ENCODE measurements at regions of chr3 and their contacts with region 1.

Region 1: DNA sequence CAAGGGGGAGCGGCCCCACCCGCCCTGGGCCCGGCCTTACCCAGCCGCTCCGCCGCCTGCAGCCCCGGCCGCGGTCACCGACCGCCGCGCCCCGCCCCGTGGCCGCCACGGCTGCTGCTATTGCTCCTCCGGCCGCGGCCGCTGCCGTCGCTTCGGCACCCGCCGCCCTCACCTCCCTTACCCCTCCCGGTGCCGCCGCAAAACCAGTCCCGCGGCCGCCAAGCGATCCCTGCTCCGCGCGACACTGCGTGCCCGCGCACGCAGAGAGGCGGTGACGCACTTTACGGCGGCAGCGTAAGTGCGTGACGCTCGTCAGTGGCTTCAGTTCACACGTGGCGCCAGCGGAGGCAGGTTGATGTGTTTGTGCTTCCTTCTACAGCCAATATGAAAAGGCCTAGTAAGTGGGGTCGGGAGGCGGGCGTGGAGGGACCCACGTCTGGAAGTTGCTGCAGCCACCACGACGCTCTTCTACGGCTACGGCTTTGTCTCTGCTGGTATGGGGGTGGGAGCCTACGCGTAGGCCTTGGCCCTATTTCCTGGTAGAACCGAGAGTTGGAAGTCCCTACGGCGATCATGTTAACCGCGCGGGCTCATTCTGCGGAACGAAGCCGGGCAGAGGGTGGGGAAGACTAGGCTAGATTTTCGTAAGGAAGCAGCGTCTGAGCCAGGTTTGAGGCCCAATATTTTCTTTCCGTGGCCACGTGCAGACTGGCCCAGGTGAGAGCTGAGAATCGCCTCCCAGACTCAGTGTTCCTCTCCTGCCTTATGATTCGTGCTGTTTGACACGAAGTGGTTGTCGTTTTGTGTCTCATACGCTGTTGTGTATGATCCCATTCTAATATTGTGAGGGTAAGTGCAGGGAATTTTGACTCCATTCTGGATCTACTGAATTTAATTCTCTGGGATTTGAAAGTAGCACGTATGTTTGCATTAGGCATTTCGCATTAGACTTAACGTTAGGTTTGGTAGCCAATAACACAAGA is at the starts of genes GNL3 and PBRM1:
- DNase-seq: peak; percentile 97
- ATAC-seq: peak; percentile 91
- total RNA-seq, gene GNL3: 28.8 TPM
- total RNA-seq, gene PBRM1: 45.3 TPM

Region 2: DNA sequence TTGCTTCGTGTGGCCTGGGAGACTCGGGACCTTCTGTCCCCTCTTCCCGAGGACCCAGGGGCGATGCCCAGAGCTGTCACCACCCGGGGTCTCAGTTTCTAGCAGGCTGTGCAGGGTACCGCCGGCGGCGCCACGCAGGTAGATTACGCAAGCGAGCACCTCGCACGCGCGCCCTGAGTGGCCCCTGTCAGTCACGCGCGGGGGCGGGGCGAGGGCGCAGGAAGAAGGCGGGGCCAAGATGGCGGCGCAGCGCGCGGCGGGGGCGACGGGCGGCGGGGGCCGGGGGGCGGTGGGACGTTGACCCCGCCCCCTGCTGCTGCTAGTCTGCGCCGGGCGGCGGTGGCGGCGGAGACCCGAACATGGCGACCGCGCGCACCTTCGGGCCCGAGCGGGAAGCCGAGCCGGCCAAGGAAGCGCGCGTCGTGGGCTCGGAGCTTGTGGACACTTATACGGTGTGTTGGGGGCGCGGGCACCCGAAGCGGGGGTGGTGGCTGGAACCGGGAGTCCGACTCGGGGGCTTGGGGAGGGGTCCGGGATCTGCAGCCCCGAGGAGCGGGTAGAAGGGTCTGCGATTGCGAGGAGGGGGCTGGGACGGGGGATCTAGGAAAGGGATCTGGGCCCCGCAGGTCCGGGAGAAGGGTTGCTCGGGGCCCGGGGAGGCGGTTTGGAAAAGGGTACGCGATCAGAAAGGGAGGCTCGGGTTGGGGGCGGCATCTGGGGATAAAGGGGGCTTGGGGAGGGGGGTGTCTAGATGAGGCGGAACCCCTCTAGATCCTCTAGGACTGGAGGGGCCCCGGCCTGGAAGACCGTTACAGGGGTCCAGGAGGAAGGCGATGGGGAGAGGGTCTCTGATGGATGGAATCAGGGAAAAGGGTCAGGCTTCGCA is 230.5 kb before region 1 on chr3 and contains the start of gene NISCH:
- intact Hi-C with region 1: loop called (anchors 5 kb)
- DNase-seq: peak; percentile 96
- ATAC-seq: peak; percentile 62
- total RNA-seq, gene NISCH: 45.6 TPM

Region 3: DNA sequence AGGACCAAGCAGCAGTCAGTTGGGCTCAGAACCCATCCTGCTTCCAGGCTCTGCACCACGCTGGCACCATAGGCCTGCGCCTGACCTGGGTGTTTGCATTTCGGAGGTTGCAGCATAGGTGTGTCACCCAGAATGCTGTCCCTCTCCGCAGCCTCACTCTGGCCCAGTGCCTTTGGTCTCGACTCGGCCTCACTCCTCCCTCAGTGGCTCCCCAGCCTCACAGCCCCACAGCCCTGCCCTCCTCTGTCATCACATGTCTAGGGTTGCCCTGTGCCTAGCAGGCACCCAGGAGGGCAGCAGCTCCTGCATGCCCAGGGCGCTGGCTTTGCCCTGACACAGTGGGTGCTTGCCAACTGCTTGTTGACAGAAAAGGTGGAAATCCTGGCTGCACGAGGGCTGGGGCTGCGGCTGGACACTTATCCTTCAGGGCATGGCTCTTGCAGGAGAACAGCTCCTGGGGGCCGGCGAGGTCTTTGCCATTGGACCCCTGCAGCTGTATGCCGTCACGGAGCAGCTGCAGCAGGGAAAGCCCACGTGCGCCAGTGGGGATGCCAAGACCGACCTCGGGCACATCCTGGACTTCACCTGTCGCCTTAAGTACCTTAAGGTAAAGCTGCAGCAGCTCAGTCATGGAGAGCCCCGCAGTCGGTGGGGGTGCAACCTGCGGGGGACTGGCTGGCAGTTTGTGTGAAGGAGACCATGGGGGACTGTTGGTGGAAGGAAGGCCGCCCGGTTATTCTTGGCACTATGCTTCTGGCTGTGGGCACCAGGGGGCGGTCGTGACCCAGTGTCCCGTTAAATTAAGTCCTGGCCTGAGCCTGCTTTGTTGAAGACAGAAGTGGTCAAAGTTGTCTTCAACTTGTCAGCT is 214.4 kb before region 1 on chr3:
- intact Hi-C with region 1: loop called (anchors 5 kb)
- DNase-seq: peak; percentile 89
- ATAC-seq: peak; percentile 83

Region 4: GRCh38 chr3:52561028-52561747 is 124.8 kb before region 1 on chr3:
- intact Hi-C with region 1: no loop called
- DNase-seq: no peak
- ATAC-seq: peak; percentile 23

Region 5: DNA sequence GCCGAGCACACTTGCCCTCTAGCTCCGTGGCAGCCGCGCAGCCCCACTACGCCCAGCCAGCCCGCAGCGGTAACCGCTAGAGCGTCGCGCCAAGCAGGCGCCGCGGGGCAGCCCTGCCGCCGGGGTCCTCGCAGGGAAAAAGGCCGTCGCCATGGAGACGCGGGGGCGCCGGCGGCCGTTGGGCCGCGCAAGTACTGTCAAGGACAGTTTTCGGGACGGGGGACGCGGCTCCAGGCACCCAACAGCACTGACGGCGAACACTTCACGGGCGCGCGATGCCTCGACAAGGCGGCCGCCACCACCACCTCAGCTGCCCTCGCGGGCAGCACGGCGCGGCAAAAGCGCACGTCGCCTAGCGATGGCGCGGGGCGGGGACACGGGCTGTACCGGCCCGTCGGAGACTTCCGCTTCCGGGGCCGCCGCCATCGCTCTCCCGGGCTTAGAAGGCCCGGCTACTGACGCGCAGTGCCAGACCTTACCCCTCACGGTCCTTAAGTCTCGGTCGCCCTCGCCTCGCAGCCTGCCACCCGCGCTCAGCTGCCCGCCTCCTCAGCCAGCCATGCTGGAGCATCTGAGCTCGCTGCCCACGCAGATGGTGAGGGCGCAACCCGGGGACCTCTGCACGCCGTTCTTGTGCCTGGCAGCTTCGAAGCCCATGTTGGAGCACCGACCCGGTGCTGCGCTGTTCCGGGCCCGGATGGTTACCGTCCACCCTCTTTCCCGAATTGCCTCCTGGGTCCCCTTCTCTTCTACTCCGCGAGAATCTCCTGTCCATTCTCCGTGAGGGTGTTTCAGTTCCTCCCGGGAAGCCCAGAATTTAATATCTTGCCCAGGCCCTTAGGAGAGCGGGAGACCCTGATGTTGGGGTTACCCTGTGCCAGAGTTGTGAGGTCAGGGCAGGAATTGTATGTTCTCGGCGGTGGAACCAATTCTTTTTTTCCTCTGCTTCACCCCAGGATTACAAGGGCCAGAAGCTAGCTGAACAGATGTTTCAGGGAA is 20.0 kb after region 1 on chr3 and contains the starts of genes GLT8D1 and SPCS1:
- intact Hi-C with region 1: loop called (anchors 2 kb)
- DNase-seq: peak; percentile 95
- ATAC-seq: peak; percentile 96
- total RNA-seq, gene GLT8D1: 33.2 TPM
- total RNA-seq, gene SPCS1: 85.0 TPM

Region 6: GRCh38 chr3:53045518-53046170 is 359.6 kb after region 1 on chr3 and contains the start of gene SFMBT1:
- intact Hi-C with region 1: no loop called
- DNase-seq: peak; percentile 83
- ATAC-seq: peak; percentile 80
- total RNA-seq, gene SFMBT1: 14.9 TPM

Measured in Right ventricle myocardium inferior (tissue), 1 donor.